PC-9 (cell line): ENCODE measurements at regions of chr10 and their contacts with region 1.

Region 1: DNA sequence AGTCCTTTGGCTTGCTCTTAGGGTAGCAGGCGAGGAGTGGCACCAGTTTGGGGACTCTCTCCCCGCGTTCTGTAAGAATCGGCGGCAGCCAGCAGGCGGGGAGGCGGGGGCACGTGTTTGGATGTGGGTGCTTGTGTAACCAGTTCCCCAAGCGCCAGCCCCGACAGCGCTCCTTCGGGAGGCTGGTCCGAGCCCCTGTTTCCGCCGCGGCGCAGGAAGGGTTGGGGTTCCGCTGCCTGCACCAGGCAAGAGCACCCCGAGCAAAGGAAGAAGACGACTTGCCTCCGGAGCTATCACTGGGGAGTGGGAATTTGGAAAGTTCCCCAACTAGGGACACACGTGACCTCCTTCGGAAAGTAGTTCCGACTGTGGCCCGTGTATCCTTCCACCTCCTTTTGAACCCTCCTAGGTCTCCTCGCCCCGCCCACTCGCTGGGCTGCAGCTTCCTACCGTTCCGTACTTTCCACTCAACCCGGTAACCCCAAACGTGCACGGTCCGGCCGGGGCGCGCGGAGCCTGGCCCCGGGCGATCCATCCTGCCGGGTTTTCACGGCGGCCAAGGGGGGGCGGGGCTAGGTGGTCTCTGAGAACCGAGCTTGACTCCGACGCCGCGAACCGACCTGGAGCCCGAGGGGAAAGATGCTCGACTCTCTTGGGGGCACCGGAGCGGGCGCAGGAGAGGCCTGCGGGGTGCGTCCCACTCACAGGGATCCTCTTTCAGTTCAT is 1.2 kb downstream of the KLLN start:
- DNase-seq: peak; percentile 82 to 88
- H3K4me3 ChIP-seq: peak overlapping the region; percentile 98
- H3K27ac ChIP-seq: peak overlapping the region; percentile 77
- H3K4me1 ChIP-seq: peaks cover 15% of the 10 kb centered on the region
- H3K27me3 ChIP-seq: no peaks in the 10 kb centered on the region
- CTCF ChIP-seq: no peak

Region 2: DNA sequence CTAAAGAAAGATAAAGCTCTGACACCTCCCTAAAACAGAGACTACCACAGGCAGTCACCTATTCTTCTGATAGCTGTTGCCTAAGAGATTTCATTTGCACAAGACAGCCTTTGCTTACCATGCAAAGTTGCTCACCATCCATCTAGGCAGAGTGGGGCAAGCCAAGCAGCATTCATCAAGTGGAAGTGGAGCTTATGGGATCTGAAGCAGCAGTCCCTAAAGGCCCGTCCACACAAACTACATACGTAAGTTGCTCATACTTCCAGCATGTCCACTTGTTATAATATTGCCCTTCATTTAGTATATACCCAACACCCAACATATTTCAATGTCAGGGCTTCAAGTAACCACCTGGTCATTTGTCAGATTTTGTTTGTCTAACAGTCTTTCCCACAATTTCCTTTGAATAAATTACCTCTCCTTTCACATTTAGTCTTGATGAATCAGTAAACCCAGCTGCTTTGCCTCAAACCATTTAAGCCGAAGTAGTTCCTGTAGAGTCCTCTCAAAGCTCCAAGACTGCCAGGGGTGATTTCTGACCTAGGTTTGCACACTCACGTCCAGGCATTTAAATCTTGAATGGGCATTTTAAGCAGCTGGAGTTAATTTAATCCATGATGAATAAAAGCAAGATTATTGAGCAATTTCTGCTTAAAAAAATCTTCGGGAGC is 112.0 kb before region 1 on chr10:
- CTCF ChIA-PET with region 1: no interaction called
- POLR2A ChIA-PET with region 1: no interaction called
- intact Hi-C with region 1: no loop called
- DNase-seq: no peak
- H3K4me3 ChIP-seq: no peak overlapping the region
- H3K27ac ChIP-seq: no peak overlapping the region
- H3K4me1 ChIP-seq: no peaks in the 10 kb centered on the region
- H3K27me3 ChIP-seq: no peaks in the 10 kb centered on the region
- CTCF ChIP-seq: no peak

Region 3: GRCh38 chr10:87850742-87851205 is 11.3 kb before region 1 on chr10:
- CTCF ChIA-PET with region 1: no interaction called
- POLR2A ChIA-PET with region 1: interaction called, 7 read pairs
- intact Hi-C with region 1: loop called (anchors 2 kb)
- DNase-seq: peak in 1 of 2 experiments; percentile 44
- H3K4me3 ChIP-seq: no peak overlapping the region
- H3K27ac ChIP-seq: no peak overlapping the region
- H3K4me1 ChIP-seq: peaks cover 5% of the 10 kb centered on the region; the same call in 1 of the 2 replicates
- H3K27me3 ChIP-seq: no peaks in the 10 kb centered on the region
- CTCF ChIP-seq: peak; percentile 46

Region 4: DNA sequence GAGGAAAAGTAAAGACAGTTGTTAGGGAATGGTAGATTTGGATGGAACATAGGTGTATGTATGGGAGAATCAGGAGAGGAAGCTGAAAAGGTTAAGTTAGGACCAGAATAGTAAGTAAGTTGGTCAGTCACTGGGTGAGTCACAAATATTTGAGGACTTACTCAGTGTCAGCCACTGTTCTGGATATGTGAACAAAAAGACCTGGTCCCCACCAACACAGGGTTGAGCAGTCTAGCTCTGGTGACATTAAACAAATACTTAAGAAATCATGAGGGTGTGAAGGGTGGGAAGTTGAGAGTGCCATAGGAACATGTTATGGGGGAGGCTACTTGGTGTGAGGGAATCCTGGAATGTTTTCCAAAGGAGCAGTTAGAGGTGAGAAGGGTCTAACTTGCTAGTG is 248.2 kb after region 1 on chr10:
- CTCF ChIA-PET with region 1: no interaction called
- POLR2A ChIA-PET with region 1: no interaction called
- intact Hi-C with region 1: loop called (anchors 1 kb)
- DNase-seq: peak; percentile 26 to 78
- H3K4me3 ChIP-seq: no peak overlapping the region
- H3K27ac ChIP-seq: peak overlapping the region; percentile 59
- H3K4me1 ChIP-seq: peaks cover 12% of the 10 kb centered on the region
- H3K27me3 ChIP-seq: no peaks in the 10 kb centered on the region
- CTCF ChIP-seq: no peak

Region 5: DNA sequence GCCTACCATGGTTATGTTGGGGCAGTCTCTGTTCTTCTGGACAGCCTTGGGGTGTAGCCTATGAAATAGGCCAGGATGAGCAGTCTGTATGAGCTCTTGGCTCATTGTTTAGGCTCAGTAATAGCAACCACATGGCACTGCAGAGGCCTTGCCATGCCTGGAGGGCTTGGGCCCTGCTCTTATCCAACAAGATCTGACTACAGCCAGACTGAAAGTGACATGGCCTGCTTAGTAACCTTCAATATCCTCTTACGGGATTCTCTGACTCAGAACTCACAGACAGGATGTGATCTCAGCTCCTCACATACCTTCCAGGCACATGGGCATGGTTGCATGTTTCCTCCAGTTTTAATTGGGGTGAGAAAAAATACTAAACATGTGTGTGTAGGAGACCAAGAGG is 290.6 kb after region 1 on chr10:
- CTCF ChIA-PET with region 1: no interaction called
- POLR2A ChIA-PET with region 1: interaction called, 3 read pairs
- intact Hi-C with region 1: loop called (anchors 2 kb)
- DNase-seq: peak; percentile 61 to 83
- H3K4me3 ChIP-seq: no peak overlapping the region
- H3K27ac ChIP-seq: peak overlapping the region; percentile 69
- H3K4me1 ChIP-seq: peaks cover 38% of the 10 kb centered on the region
- H3K27me3 ChIP-seq: no peaks in the 10 kb centered on the region
- CTCF ChIP-seq: no peak

Region 6: GRCh38 chr10:88389456-88389855 is 527.3 kb after region 1 on chr10:
- CTCF ChIA-PET with region 1: interaction called, 6 read pairs
- POLR2A ChIA-PET with region 1: interaction called, 4 read pairs
- intact Hi-C with region 1: loop called (anchors 1 kb)
- DNase-seq: no peak
- H3K4me3 ChIP-seq: no peak overlapping the region
- H3K27ac ChIP-seq: no peak overlapping the region
- H3K4me1 ChIP-seq: peaks cover 26% of the 10 kb centered on the region
- H3K27me3 ChIP-seq: no peaks in the 10 kb centered on the region
- CTCF ChIP-seq: peak; percentile 60